Natural killer cell (primary cell): ENCODE measurements at regions of chr15 and their contacts with region 1.

Region 1: GRCh38 chr15:55407949-55408791 is at the starts of genes CCPG1 and PIERCE2:
- DNase-seq: peak; percentile 86 to 94
- ATAC-seq: peak; percentile 88 to 95 (median 91)
- H3K4me3 ChIP-seq: peak within 1 kb of the TSS; percentile 82
- H3K4me3 Mint-ChIP-seq: peak within 1 kb of the TSS; percentile 97
- H3K27ac ChIP-seq: peak within 1 kb of the TSS; percentile 92
- H3K27ac Mint-ChIP-seq: peak within 1 kb of the TSS; percentile 92 to 94
- H3K4me1 ChIP-seq: peaks cover 25% of the 10 kb centered on the region
- H3K4me1 Mint-ChIP-seq: peaks cover 31 to 32% of the 10 kb centered on the region in 2 donors
- H3K27me3 ChIP-seq: no peaks in the 10 kb centered on the region
- H3K27me3 Mint-ChIP-seq: no peaks in the 10 kb centered on the region
- CTCF ChIP-seq: peak; percentile 91
- total RNA-seq, gene CCPG1: 41.6 to 53.6 (median 43.8) TPM
- total RNA-seq, gene PIERCE2: 0.47 to 0.53 TPM in 2 of 3 donors, not detected in the other

Region 2: DNA sequence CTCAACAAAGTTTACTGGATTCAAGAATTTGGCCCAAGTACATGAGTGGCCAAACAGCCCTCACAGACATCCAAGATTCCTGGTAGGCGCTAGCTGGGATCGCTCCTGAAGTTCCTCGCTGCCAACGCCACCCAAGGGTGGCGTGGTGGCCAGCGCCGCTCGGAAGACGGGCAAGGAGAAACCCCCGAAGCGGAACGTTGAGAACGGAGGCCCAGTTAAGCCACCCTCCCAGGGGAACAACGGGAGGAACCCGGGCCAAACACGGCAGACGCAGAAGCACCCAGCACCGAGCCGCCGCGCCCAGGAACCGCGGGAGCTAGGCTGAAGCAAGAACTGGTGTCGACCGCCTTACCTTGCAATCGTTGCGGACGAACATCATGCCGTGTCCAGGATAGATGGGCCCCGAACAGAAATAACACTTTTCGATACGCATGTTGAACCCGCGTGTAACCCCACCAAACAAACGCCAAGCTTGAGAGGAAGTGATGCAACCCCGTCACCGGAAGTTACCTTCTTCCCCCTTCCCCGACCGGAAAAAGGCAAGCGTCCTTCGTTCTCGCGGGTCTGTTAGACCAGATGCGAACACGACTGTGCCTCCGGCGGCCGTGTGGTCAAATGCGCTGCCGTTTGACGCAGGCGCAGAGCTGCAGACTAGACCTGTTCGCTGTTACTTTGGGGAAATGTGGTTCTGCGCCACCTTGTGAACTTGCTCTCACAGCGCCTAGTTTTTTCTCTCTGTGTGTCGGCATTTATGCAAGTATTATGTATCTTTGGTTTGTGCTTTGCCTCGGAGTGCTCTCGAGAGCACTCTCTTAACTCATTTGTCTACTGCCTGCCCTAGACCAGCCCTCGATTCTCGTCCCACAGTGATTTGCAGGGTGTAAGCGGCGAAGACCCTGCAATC is 211.5 kb before region 1 on chr15 and contains the start of gene RSL24D1:
- intact Hi-C with region 1: loop called (anchors 2 kb)
- DNase-seq: peak; percentile 89 to 99
- ATAC-seq: peak; percentile 94 to 99 (median 97)
- H3K4me3 ChIP-seq: peak within 1 kb of the TSS; percentile 82
- H3K4me3 Mint-ChIP-seq: no peak within 1 kb of the TSS
- H3K27ac ChIP-seq: peak within 1 kb of the TSS; percentile 90
- H3K27ac Mint-ChIP-seq: no peak within 1 kb of the TSS
- H3K4me1 ChIP-seq: peaks cover 3% of the 10 kb centered on the region
- H3K4me1 Mint-ChIP-seq: peaks cover 0 to 9% of the 10 kb centered on the region in 2 donors
- H3K27me3 ChIP-seq: no peaks in the 10 kb centered on the region
- H3K27me3 Mint-ChIP-seq: no peaks in the 10 kb centered on the region
- CTCF ChIP-seq: peak; percentile 27
- total RNA-seq, gene RSL24D1: 97.4 to 102 (median 102) TPM

Region 3: GRCh38 chr15:55318588-55319494 is 89.3 kb before region 1 on chr15 and contains the starts of genes PIGB and PIGBOS1:
- intact Hi-C with region 1: loop called (anchors 5 kb)
- DNase-seq: peak; percentile 80 to 88
- ATAC-seq: peak; percentile 88 to 93 (median 91)
- H3K4me3 ChIP-seq: peak within 1 kb of the TSS; percentile 76
- H3K4me3 Mint-ChIP-seq: peak within 1 kb of the TSS; percentile 99
- H3K27ac ChIP-seq: peak within 1 kb of the TSS; percentile 91
- H3K27ac Mint-ChIP-seq: peak within 1 kb of the TSS; percentile 99
- H3K4me1 ChIP-seq: peaks cover 17% of the 10 kb centered on the region
- H3K4me1 Mint-ChIP-seq: peaks cover 57 to 65% of the 10 kb centered on the region in 2 donors
- H3K27me3 ChIP-seq: no peaks in the 10 kb centered on the region
- H3K27me3 Mint-ChIP-seq: no peaks in the 10 kb centered on the region
- CTCF ChIP-seq: no peak
- total RNA-seq, gene PIGB: 24.9 to 33.5 (median 26.1) TPM
- total RNA-seq, gene PIGBOS1: 7.7 to 10.9 (median 9.3) TPM

Region 4: DNA sequence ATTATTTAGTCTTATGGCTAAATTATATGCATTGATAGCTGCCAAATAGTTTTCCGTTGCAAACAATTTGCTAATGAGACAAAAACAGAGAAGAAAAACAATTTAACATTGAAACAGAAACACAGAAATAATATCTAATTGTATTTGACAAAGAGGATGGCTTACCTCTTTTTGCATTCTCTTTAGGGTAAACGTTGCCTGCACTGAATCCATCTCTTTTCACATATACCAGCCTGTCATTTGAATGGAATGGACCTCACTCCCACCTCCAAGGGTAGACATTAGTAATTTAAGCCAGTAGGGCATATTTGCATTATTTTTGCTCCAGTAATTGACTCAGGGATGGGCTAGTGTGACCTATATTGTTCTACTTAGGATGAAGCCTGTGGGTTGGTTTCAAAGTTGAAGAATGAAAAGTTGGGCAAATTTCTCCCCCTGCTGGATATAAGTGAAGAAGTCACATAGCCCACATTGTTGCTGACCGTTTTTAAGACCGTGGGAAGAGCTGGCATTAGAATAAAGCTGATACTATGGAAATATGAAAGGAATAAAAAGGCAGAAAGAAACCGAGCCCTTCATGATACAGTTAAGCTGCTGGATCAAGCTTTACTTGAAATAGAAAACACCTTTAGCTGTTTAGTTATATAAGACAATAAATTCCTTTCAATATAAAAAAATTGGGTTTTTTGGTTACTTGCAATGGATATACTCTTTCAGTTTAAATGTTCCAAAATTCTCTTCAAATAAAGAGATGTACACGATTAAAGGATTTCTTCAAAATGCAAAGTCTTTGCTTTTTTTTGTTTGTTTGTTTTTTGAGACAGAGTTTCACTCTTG is 27.0 kb after region 1 on chr15:
- intact Hi-C with region 1: loop called (anchors 1 kb)
- DNase-seq: peak in 1 of 2 donors; percentile 66
- ATAC-seq: peak in 2 of 3 donors; percentile 67
- H3K4me3 ChIP-seq: no peak overlapping the region
- H3K4me3 Mint-ChIP-seq: no peak overlapping the region
- H3K27ac ChIP-seq: no peak overlapping the region
- H3K27ac Mint-ChIP-seq: no peak overlapping the region
- H3K4me1 ChIP-seq: no peaks in the 10 kb centered on the region
- H3K4me1 Mint-ChIP-seq: peaks cover 4% of the 10 kb centered on the region in 2 donors
- H3K27me3 ChIP-seq: no peaks in the 10 kb centered on the region
- H3K27me3 Mint-ChIP-seq: no peaks in the 10 kb centered on the region
- CTCF ChIP-seq: peak; percentile 52